ENCODE measurements at regions of chr11 and their contacts with region 1.

Region 1: GRCh38 chr11:47161134-47161854 is 15.4 kb downstream of the ARFGAP2 start:
- DNase-seq: no peak
- H3K4me3 ChIP-seq: no peak overlapping the region
- CTCF ChIP-seq: peak; percentile 85

Region 2: DNA sequence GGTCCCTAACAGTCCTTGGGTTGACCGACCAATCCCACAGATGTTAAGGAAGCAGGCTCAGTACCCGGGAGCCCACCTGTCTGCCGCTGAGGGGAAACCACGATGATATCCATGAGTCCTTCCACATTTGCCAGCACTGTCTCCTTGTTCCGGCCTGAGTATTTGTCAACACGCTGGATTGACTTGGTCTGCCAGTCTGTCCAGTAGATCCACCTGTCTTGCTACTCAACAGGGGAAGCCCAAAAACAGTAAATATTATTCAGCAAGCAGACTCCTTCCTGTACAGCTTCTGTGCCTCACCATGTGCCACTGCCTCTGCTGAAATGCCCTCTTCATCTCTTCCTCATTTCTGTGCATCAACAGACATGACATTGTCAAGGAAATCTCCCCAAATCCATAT is 292.4 kb before region 1 on chr11:
- CTCF ChIA-PET with region 1: interaction called, 10 read pairs
- POLR2A ChIA-PET with region 1: no interaction called
- DNase-seq: no peak
- H3K4me3 ChIP-seq: no peak overlapping the region
- CTCF ChIP-seq: no peak

Region 3: DNA sequence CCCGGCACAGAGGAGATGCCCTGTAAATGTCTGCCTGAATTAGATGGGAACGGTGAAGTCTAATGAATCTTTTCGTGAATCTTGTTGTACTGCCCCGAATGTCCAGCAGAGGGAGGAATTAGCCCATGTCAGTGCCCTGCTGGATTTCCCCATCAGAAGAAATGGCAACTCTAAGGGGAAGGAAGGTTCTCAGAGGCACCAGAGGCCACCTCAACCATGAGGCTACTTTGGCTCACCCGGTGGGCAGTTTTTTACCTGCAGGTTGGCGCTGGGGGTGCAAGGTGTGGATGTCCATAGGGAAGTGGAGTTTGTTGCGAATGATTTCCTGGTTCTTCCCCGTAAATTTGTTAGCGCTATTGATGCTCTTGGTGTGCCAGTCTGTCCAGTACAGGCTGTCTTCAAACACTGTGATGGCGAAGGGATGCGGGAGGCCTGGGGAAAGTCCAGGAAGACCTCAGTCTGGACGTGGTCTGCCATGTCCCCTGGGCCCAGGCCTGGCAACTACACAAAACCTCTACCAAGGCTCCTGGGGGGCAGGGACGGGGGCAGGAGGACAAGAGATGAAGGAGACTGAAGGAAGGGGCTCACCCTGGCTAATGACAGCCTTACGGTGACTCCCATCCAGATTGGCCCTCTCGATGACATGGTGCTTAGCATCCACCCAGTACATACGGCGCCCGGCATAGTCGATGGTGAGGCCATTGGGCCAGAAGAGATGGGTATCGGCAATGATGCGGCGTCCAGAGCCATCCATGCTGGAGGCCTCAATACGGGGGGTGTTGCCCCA is 271.4 kb before region 1 on chr11:
- CTCF ChIA-PET with region 1: interaction called, 181 read pairs
- POLR2A ChIA-PET with region 1: interaction called, 4 read pairs
- DNase-seq: peak; percentile 7
- H3K4me3 ChIP-seq: no peak overlapping the region
- CTCF ChIP-seq: peak; percentile 77